ENCODE measurements at regions of chr20 and their contacts with region 1.

Region 1: GRCh38 chr20:44080646-44081267 is 106.2 kb downstream of the JPH2 start:
- DNase-seq: peak; percentile 83
- H3K4me3 Mint-ChIP-seq: no peak overlapping the region
- H3K27ac Mint-ChIP-seq: no peak overlapping the region
- H3K4me1 Mint-ChIP-seq: peaks cover 19% of the 10 kb centered on the region
- H3K27me3 Mint-ChIP-seq: peaks cover 23% of the 10 kb centered on the region

Region 2: DNA sequence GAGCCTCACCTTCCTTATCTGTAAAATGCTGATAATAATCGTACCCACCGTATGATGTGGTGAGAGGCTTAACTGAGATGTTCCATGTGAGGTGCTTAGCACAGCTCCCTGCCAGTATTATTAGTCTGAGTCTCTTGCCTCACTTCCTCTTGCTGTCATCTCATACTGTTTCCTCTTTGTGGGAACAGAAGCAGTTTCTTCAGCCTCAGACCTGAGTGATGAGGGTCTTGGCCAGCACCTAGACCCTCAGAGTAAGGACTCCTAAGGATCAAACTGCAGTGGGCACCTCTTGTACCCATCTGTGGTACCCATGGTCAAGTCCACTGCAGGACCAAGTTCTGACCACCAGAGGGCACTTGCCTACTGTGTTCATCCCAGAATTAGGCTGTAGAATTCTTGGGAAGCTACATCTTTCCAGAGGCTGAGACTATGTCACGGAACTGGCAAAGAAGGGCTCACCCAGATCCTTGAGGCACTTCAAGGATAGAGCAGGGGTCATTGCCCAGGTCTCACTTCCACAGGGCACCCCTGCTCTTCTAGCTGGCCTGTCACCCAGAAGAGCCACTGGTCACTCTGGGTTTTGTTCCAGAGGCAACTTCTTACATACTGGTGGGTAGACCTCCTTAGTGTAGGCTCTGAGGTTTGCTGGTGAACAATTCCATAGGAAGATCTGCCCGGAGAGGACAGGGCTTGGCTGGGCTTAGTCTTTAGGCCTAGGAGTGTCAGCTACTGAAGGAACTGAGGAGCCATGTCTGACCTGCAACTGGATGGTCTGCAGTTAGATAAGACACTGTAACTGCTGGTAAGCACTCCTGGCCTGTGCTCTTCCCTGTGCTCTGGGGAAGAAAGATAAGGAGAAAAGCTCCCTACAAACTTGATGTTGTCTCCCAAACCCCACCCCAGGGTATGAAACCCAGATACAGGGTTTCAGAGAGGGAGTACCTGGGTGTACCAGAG is 542.6 kb before region 1 on chr20:
- CTCF ChIA-PET with region 1: interaction called, 14 read pairs
- DNase-seq: peak; percentile 63
- H3K4me3 Mint-ChIP-seq: no peak overlapping the region
- H3K27ac Mint-ChIP-seq: peak overlapping the region; percentile 12
- H3K4me1 Mint-ChIP-seq: no peaks in the 10 kb centered on the region
- H3K27me3 Mint-ChIP-seq: peaks cover 3% of the 10 kb centered on the region

Region 3: DNA sequence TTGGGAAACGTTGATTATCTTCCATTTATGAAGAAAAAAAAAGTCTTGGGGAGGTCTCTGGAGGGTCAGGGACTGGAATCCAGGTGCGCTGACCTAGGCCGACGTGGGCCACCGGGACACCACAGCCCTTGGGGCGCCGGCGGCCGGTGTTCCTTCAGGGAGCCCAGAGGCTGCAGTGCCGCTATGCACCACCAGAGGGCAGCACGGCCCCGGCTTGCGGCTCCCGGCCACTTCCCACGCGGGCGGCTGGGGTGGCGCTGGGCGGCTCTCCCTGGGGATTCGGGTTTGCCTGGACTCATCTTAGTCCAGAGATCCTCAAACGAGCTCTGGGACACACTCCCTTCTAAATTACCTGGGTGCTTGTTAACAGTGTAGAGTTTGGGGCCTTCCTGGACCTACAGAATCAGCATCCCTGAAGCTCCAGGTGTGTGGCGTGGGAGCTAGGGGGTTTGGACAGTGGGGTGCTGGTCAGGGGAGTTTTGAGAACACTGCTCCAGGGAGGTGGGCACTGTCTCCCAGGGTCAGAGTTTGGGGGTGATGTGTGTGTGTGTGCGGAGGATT is 330.9 kb before region 1 on chr20:
- CTCF ChIA-PET with region 1: interaction called, 81 read pairs
- DNase-seq: peak; percentile 84
- H3K4me3 Mint-ChIP-seq: no peak overlapping the region
- H3K27ac Mint-ChIP-seq: peak overlapping the region; percentile 64
- H3K4me1 Mint-ChIP-seq: peaks cover 40% of the 10 kb centered on the region
- H3K27me3 Mint-ChIP-seq: no peaks in the 10 kb centered on the region

Region 4: GRCh38 chr20:43840382-43841070 is 240.2 kb before region 1 on chr20:
- CTCF ChIA-PET with region 1: interaction called, 11 read pairs
- DNase-seq: peak; percentile 53
- H3K4me3 Mint-ChIP-seq: no peak overlapping the region
- H3K27ac Mint-ChIP-seq: no peak overlapping the region
- H3K4me1 Mint-ChIP-seq: peaks cover 46% of the 10 kb centered on the region
- H3K27me3 Mint-ChIP-seq: peaks cover 3% of the 10 kb centered on the region

Region 5: GRCh38 chr20:44056010-44056698 is 24.6 kb before region 1 on chr20:
- CTCF ChIA-PET with region 1: interaction called, 66 read pairs
- DNase-seq: peak; percentile 76
- H3K4me3 Mint-ChIP-seq: no peak overlapping the region
- H3K27ac Mint-ChIP-seq: no peak overlapping the region
- H3K4me1 Mint-ChIP-seq: peaks cover 11% of the 10 kb centered on the region
- H3K27me3 Mint-ChIP-seq: peaks cover 38% of the 10 kb centered on the region

Region 6: DNA sequence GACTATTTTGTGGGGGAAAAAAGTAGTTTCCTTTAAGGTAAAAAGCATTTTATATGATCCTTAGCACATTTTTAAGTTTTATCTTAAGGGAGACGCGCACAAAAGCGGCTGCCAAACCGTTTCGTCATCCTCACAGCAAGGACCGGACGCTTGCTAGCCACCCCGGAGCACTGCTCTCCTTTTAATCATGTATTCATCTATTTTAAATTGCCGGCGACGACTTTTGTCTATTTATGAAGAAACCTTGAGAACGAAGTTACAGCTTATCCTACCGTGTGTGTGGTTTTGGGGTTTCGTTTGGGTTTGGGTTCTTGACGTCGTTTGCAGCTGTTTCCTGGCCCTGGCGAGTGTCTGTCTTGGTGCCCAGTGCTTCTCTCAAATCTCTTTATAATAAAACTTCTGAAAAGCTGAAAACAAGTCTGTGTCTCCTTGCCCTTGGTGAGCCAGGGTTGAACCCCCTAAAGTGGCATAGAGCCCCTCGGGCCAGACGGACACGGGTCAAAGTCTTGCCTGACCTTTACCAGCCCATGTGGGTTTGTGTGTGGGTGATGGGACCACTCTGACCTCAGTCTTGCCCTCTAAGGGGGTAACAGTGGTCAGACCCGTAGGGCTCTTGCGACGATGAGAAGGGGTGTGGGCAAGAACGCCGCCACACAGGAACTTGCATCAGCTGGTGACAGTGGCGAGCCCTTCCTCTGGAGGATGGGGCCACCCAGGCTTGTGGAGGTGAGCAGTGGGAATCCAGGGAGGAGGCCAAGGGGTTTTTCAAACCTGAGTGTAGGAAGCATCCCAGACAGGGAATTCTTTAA is 11.3 kb before region 1 on chr20:
- CTCF ChIA-PET with region 1: interaction called, 13 read pairs
- DNase-seq: peak; percentile 83
- H3K4me3 Mint-ChIP-seq: peak overlapping the region; percentile 78
- H3K27ac Mint-ChIP-seq: peak overlapping the region; percentile 100
- H3K4me1 Mint-ChIP-seq: peaks cover 73% of the 10 kb centered on the region
- H3K27me3 Mint-ChIP-seq: peaks cover 69% of the 10 kb centered on the region

Region 7: GRCh38 chr20:44166477-44166876 is 85.7 kb after region 1 on chr20:
- CTCF ChIA-PET with region 1: no interaction called
- DNase-seq: no peak
- H3K4me3 Mint-ChIP-seq: no peak overlapping the region
- H3K27ac Mint-ChIP-seq: no peak overlapping the region
- H3K4me1 Mint-ChIP-seq: no peaks in the 10 kb centered on the region
- H3K27me3 Mint-ChIP-seq: peaks cover 62% of the 10 kb centered on the region